PC-3 (cell line): ENCODE measurements at regions of chr5 and their contacts with region 1.

Region 1: DNA sequence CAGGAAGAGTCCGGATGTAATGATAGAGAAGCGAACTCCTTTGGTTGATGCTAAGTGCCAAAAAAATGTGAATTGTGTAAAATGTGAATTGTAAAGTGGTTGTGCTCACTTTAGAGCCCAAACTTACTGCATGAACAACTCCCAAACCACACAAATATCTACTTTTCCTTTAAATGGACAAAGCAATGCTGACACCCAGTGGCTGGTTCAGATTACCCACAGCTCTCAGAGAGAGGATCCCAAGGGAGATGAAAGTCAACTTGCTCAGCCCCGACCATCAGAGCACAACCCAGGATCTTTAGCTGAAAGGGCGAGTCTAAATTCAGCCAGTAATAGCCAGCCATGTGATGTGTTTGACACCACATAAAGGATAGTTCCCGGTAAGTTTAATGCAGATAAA is 133.7 kb downstream of the NMUR2 start:
- DNase-seq: peak; percentile 87
- ATAC-seq: peak; percentile 91
- H3K4me3 ChIP-seq: no peak overlapping the region
- H3K27ac ChIP-seq: no peak overlapping the region
- H3K4me1 ChIP-seq: no peaks in the 10 kb centered on the region; the same call in 1 of the 2 replicates
- H3K27me3 ChIP-seq: no peaks in the 10 kb centered on the region
- CTCF ChIP-seq: peak; percentile 95

Region 2: DNA sequence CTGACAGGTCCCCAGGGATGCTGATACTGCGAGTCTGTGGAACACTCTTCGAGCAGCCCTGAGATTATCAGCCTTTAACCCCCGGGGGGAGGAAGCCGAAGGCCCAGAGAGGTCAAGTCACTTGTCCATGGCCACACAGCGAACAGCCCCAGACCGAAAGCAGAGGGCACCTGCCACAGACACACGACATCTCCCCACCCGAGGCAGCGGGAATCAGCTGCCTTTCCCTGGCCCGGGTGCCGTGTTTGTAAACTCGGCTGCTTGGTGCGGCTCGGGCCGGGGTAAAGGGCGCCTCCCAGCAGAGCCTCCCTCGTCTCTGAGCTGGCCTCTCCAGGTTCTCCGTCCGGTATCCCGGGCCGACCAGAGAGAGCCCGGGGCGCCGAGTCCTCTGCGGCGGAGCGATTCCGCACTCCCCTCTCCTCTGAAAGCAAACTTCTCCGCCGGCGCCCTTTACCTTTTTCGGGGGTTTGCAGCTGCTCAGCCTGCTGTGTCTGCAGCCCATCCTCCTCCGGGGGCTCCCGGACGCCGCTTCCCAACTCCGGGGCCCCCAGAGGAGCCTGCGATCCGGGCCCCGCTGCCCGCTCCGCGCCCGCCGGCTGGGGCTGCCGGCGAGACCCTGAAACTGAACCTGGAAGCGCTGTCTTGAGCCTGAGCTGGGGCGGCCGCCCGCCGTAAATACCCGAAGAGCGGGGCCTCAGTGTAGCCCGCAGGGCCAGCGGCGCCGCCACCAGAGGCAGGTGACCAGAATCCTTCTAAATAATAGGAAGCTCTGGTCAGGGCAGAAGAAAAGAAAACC is 1047.8 kb before region 1 on chr5 and contains the start of gene CCDC69:
- CTCF ChIA-PET with region 1: no interaction called
- POLR2A ChIA-PET with region 1: no interaction called
- intact Hi-C with region 1: no loop called
- DNase-seq: peak; percentile 77
- ATAC-seq: peak; percentile 89
- H3K4me3 ChIP-seq: peak within 1 kb of the TSS; percentile 92
- H3K27ac ChIP-seq: no peak within 1 kb of the TSS
- H3K4me1 ChIP-seq: peaks cover 19% of the 10 kb centered on the region; the same call in 1 of the 2 replicates
- H3K27me3 ChIP-seq: no peaks in the 10 kb centered on the region
- CTCF ChIP-seq: 0 out of 2 replicates have a peak, but pooled peaks have one; percentile 13
- total RNA-seq, gene CCDC69: 19.2 and 26.4 TPM in 2 replicates

Region 3: GRCh38 chr5:151924564-151925301 is 346.7 kb before region 1 on chr5 and contains the start of gene GLRA1:
- CTCF ChIA-PET with region 1: no interaction called
- POLR2A ChIA-PET with region 1: no interaction called
- intact Hi-C with region 1: loop called (anchors 5 kb)
- DNase-seq: peak; percentile 55
- ATAC-seq: no peak
- H3K4me3 ChIP-seq: no peak within 1 kb of the TSS
- H3K27ac ChIP-seq: no peak within 1 kb of the TSS
- H3K4me1 ChIP-seq: no peaks in the 10 kb centered on the region
- H3K27me3 ChIP-seq: peaks cover 29% of the 10 kb centered on the region
- CTCF ChIP-seq: no peak
- total RNA-seq, gene GLRA1: not detected in 2 replicates

Region 4: GRCh38 chr5:152193367-152194107 is 77.9 kb before region 1 on chr5:
- CTCF ChIA-PET with region 1: no interaction called
- POLR2A ChIA-PET with region 1: no interaction called
- intact Hi-C with region 1: loop called (anchors 2 kb)
- DNase-seq: peak; percentile 90
- ATAC-seq: peak; percentile 76
- H3K4me3 ChIP-seq: peak overlapping the region; percentile 38
- H3K27ac ChIP-seq: peak overlapping the region; percentile 86
- H3K4me1 ChIP-seq: peaks cover 52% of the 10 kb centered on the region
- H3K27me3 ChIP-seq: no peaks in the 10 kb centered on the region
- CTCF ChIP-seq: no peak

Region 5: DNA sequence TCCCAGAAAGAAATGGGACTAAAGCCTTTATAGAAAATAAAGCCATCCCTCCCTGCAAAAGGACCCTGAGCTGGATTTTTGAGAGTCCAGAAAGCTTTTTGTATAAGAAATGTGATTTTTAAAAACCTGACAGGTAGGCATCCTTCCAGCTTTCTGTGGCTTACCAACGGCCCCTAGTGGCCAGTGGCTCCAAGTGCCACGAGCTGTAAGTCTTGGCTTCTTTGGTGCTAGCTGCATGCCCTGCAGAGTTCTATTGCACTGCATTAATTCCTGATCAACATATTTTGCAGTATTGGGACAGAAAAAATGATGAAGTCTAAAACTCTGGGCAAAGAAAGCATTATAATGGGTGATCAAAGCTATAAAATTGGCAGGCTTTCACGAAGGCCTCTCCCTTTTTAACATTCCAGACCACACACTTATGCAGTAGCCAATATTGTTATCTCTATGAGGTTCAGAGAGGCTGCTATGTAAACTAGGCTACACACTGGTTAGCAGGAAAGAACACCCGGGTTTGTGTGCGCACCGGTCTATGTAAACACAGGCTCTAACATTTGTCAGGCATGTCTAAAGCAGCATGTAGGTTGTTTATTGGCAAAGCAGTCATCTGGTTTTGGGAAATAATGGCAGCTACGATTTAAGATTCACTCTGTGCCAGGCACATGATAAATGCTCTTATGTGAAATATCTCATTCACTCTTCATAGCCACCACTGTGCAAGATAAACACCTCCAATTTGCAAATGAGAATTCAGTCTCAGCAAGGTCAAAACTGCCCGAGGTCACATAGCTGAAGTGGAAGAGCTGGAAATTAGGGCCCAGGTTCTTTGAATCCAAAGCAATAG is 78.5 kb after region 1 on chr5:
- CTCF ChIA-PET with region 1: interaction called, 6 read pairs
- POLR2A ChIA-PET with region 1: no interaction called
- intact Hi-C with region 1: loop called (anchors 1 kb)
- DNase-seq: peak; percentile 79
- ATAC-seq: peak; percentile 83
- H3K4me3 ChIP-seq: no peak overlapping the region
- H3K27ac ChIP-seq: no peak overlapping the region
- H3K4me1 ChIP-seq: no peaks in the 10 kb centered on the region
- H3K27me3 ChIP-seq: no peaks in the 10 kb centered on the region
- CTCF ChIP-seq: peak; percentile 98

Region 6: DNA sequence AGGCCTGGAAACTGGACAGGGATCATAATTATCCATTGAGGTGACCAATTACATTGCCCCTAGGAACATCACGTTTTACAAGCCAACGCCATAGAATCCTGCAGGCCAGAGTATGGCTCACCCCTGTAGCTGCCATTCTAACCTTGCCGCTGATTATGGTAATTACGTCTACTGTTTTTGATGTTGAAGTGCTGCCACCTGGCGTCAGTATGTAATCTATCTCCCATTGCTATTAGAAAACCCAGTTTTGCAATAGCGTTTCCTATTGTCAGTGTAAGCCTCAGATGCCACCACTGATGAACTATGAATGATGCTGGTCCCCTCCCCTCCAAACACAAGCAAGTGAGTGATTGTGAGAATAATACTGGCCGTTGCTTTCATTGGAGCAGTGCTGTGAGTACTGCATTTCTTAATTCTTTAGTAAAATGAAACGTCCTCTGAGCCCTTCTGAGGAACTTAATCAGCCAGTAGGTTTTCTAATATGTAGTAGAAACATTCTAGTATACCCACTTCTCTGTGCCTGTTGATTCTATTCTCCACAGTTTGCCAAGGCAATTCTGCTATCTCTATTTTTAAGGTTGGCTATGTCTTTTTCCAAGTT is 234.1 kb after region 1 on chr5:
- CTCF ChIA-PET with region 1: no interaction called
- POLR2A ChIA-PET with region 1: no interaction called
- intact Hi-C with region 1: loop called (anchors 5 kb)
- DNase-seq: peak; percentile 65
- ATAC-seq: peak; percentile 74
- H3K4me3 ChIP-seq: no peak overlapping the region
- H3K27ac ChIP-seq: no peak overlapping the region
- H3K4me1 ChIP-seq: no peaks in the 10 kb centered on the region
- H3K27me3 ChIP-seq: 0 out of 2 replicates have a peak, but pooled peaks cover 5% of the 10 kb centered on the region
- CTCF ChIP-seq: peak; percentile 77

Region 7: DNA sequence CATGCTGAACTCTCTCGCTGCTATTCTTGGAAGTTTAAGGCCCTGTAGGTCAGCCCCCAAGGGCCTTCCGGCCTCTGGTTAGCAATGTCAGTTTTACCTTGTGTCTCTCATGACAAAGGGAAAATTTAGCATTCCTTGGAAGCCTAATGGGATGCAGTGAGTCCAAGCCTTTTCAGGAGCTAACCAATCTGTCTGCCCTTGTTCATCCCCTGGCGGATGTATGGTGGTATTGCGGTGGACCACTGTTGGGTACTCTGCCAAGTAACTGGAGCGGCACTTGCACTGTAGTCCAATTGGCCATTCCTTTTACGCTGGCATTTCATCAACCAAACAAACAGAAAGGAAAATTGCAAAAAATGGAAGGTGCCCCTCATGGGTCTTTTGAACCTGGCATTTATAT is 452.1 kb after region 1 on chr5:
- CTCF ChIA-PET with region 1: no interaction called
- POLR2A ChIA-PET with region 1: no interaction called
- intact Hi-C with region 1: no loop called
- DNase-seq: no peak
- ATAC-seq: no peak
- H3K4me3 ChIP-seq: no peak overlapping the region
- H3K27ac ChIP-seq: no peak overlapping the region
- H3K4me1 ChIP-seq: no peaks in the 10 kb centered on the region
- H3K27me3 ChIP-seq: no peaks in the 10 kb centered on the region
- CTCF ChIP-seq: no peak